ENCODE measurements at regions of chr3 and their contacts with region 1.

Region 1: GRCh38 chr3:159828542-159828943 is 160.1 kb upstream of the IL12A start:
- DNase-seq: no peak
- H3K4me3 ChIP-seq: no peak overlapping the region
- CTCF ChIP-seq: peak; percentile 33

Region 2: DNA sequence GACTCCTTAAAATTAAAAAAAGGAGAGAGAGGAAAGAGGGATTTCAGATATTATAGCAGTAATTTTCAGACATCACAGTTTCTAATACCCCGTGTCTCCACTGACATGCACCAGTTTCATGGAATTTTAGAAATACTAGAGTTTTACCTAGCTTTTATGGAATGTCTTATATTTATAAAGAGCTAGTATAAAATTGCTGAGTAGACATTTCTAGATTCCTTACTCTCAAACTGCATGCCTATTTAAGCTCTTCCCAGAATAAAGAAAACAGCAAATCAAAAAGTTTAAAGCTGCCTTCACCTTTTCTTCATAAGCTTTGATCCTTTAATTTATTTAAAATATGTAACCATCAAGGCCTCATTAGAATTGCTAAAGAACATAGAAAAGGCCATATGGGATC is 87.3 kb before region 1 on chr3:
- CTCF ChIA-PET with region 1: no interaction called
- POLR2A ChIA-PET with region 1: no interaction called
- DNase-seq: no peak
- H3K4me3 ChIP-seq: no peak overlapping the region
- CTCF ChIP-seq: no peak

Region 3: GRCh38 chr3:159813822-159814523 is 14.6 kb before region 1 on chr3:
- CTCF ChIA-PET with region 1: interaction called, 33 read pairs
- POLR2A ChIA-PET with region 1: no interaction called
- DNase-seq: no peak
- H3K4me3 ChIP-seq: no peak overlapping the region
- CTCF ChIP-seq: no peak

Region 4: DNA sequence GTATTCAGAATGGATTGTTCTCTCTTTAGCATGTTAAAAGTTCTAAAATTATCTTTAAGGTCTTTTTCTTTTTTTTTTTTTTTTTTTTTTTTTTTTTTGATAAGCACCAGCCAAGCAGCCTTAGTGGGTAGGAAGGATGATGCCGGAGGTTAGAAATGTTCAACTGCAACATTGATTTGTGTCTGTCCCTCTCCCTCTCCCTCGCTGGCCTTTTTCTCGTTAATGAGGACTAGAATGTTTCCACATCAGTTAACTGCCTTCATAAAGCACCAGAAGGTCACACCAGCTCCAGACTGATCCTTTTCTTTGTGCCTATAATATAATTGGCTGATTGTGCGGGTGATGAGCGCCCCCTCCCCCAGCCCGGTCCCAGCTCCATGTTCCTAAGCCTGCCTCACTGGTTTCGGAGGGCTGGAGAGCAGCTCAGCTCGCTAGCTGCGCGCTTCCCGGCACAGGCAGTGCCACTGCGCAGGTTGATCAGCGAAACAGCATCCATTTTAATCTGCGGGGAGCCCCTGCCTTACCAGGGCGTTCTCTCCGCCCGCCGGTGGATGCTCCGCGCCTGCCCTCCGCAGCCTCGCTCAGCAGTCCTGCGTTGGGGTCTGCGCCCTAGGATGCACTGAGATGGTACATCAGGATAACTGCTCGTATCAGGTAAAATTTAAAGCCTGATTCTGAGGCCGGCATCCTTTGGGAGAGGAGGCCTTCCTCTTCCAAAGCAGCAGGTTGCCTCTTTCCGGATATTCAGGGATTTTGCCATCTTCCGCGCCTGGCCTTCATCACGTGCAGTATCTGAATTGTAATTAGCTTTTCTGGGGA is 11.2 kb after region 1 on chr3:
- CTCF ChIA-PET with region 1: interaction called, 42 read pairs
- POLR2A ChIA-PET with region 1: no interaction called
- DNase-seq: no peak
- H3K4me3 ChIP-seq: no peak within 1 kb of the TSS
- CTCF ChIP-seq: no peak

Region 5: GRCh38 chr3:159852821-159853505 is 24.4 kb after region 1 on chr3:
- CTCF ChIA-PET with region 1: interaction called, 40 read pairs
- POLR2A ChIA-PET with region 1: no interaction called
- DNase-seq: no peak
- H3K4me3 ChIP-seq: peak overlapping the region; percentile 43
- CTCF ChIP-seq: no peak

Region 6: DNA sequence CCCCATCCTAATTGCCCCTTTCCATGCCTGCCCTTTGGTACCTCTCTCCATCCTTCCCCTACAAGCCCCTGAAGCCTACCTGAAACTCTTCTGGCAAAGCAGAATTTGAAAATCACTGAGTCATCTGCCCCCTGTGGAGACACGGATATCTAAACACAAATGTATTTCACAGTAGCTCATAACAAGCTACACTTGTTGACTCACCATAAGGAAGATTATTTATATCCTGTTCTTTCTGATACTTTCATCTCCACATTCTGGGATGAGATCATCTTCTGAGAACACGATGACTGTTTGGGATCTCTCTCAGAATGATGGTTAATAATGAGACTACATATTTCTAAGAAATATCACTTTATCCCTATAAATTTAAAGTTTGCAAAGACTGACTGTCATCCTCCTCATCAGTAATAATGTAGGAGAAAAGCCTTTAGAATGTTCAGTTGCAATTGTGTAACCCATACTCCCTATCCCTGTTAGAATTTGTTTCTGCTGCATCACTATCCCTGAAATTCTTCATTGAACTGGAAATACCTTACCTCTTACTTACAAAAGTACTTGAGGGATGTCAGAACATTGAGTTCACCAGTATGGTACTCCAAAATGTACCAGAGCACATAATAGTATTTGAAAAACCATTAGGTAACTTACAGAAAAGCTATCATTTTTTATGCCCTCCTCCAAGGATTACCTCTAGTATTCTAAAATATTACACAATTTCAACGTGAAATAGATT is 44.0 kb after region 1 on chr3:
- CTCF ChIA-PET with region 1: interaction called, 43 read pairs
- POLR2A ChIA-PET with region 1: no interaction called
- DNase-seq: peak; percentile 66
- H3K4me3 ChIP-seq: no peak overlapping the region
- CTCF ChIP-seq: peak; percentile 19

Region 7: DNA sequence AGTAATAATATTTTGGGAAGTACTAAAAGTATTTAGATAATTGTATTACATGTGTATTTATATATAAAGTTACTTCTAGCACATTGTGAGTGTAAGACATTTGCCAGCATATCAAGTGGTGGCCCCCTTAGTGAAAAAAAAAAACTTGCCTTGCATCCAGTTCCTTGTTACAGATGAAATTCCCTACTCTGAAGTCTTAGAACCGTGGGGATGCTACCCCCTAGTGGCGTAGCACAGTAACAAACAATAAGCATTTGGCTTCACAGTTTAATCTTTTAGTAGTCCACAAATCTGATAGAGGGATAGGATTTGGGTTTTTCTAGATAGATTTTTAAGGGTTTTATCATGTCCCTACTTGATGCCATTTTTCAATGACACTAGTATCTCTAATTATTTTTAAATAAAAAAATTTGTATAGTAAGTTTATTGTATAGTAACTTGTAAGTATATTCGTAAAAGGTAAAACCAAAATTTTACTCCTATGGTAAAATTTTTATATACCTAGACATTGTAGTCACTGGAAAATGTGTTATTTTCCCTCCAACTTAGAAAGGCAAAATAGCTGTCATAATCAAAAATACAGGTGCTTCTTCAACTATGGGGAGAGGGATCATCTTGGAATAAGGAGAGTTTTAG is 585.2 kb after region 1 on chr3:
- CTCF ChIA-PET with region 1: interaction called, 10 read pairs
- POLR2A ChIA-PET with region 1: no interaction called
- DNase-seq: no peak
- H3K4me3 ChIP-seq: no peak overlapping the region
- CTCF ChIP-seq: peak; percentile 70

Measured in AG04449 (cell line).